PC-3 (cell line): ENCODE measurements at regions of chr9 and their contacts with region 1.

Region 1: DNA sequence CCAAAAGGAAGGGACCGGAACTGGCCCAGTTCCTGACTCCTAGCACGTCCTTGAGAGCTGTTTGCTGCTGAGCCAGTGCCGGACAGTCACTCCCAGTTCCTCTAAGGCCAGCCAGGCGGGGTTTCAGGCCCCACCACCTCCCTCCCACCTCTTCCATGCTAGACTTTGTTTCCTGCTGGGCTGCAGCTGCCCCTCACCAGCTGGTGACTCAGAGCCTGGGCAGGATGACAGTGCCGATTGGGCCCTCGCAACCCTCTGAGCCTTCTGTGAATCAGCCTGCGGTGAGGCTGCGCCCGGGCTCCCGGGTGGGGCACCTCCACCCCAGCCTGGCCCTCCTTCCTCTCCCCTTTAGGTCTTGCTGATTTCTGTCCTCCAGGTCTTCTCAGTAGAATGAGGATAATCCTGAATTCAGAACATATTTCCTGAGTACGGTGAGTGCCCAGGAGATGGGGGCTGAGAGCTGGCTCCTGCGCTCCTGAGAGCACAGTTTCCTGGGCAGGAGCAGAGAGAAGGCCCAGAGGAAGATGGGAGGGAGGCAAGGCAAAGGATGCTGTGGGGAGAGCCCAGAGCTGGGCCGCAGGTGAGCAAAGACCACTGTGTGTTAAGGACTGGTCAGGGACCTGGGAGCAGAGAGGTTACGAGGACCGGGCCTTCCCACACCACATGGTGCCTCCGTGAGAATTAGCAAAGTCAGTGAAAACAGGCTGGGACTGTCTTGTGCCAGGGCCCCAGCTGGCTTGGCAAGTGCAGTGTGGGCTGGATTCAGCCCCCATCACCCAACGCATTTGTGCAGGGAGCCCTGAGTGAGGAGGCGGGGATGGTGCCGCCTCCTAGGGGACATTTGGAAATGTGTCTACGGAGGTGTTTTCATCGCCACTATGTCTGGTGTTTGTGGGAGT is 32.9 kb upstream of the STXBP1 start:
- DNase-seq: peak; percentile 96
- ATAC-seq: peak; percentile 80
- H3K4me3 ChIP-seq: peak overlapping the region; percentile 69
- H3K27ac ChIP-seq: peak overlapping the region; percentile 100
- H3K4me1 ChIP-seq: peaks cover 46% of the 10 kb centered on the region
- H3K27me3 ChIP-seq: no peaks in the 10 kb centered on the region
- CTCF ChIP-seq: peak; percentile 51

Region 2: GRCh38 chr9:127561619-127562500 is 17.3 kb before region 1 on chr9:
- CTCF ChIA-PET with region 1: interaction called, 8 read pairs
- POLR2A ChIA-PET with region 1: interaction called, 4 read pairs
- intact Hi-C with region 1: loop called (anchors 2 kb)
- DNase-seq: peak; percentile 96
- ATAC-seq: peak; percentile 77
- H3K4me3 ChIP-seq: peak overlapping the region; percentile 25; the same call in 1 of the 2 replicates
- H3K27ac ChIP-seq: peak overlapping the region; percentile 94
- H3K4me1 ChIP-seq: peaks cover 85% of the 10 kb centered on the region
- H3K27me3 ChIP-seq: no peaks in the 10 kb centered on the region
- CTCF ChIP-seq: no peak